Heart left ventricle (tissue), 16 donors: ENCODE measurements at regions of chr12 and their contacts with region 1.

Region 1: DNA sequence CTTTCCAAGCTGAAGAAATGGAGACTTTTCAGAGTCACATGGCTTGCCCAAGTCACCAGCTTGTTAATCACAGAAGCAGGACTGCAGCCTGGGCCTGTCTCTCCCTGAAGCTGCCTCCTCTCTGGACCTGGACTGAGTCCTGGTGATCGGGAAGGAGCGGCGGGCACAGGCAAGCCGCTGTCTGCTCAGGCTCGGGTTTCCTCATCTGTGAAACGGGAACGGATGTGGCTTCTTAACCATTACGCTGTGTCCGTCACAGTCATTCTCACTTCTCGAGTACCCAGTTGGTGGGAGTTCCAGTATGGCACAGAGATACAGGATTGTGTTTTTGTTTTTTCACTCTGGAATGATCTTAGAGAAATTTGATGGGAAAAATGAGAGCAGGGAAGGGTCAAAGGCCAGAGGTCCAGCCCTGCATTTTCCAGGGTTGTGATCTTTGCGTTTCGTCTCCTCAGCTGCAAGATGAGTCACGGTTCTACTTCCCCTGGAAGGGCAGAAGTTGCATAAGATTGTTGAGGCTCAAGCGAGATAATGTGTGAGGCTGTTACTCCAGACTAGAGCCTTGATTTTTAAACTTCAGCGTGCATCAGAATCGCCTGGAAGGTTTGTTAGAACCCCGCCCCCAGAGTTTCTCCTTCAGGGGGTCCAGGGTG is 7.6 kb upstream of the LRTM2 start:
- DNase-seq: peak in 2 of 5 donors; percentile 50 to 51
- ATAC-seq: peak; percentile 44 to 74 (median 59)
- H3K4me3 ChIP-seq: peak overlapping the region in 1 of 12 donors; percentile 10
- H3K27ac ChIP-seq: peak overlapping the region in 8 of 12 donors; percentile 24 to 89 (median 46)
- H3K4me1 ChIP-seq: peaks cover 0 to 51% (median 0%) of the 10 kb centered on the region in 12 donors
- H3K27me3 ChIP-seq: peaks cover 0 to 14% (median 0%) of the 10 kb centered on the region in 9 donors
- CTCF ChIP-seq: no peak
- POLR2A ChIP-seq: no peak

Region 2: DNA sequence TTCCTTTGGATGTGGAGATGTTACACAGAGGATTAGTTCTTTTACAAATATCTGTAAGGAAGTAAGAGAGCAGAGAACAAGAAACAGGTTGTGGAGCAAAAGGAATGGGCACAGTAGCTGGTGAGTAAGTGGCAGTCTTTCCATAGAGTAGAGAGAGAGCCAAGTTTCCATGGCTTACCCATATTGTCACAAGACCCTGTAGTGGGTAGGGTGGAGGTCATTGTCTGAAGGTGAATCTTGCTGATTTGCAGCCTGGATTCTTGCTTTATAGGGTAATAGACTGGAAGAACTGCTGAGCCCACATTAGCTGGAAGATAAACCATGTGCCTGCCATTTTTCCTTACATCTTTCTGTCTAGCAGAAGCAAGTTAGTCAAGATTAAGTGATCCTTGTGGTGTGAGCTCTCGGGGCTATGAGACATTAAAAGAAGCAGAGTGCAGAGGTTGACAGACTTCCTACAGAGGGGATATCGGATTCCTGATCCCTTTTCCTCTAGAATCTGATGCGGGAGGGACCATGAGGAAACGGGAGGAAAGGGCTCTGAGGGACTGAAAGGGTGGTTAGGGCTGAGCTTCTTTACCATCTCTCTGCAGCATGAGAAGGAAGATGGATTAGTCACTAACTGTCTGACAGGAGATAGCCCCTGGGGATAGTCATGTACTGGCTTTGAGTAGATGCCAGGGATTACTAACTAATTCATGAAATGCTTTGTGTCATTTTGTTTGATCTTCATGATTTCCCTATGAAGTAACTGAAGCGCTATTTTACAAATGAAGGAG is 36.4 kb before region 1 on chr12:
- intact Hi-C with region 1: no loop called
- DNase-seq: no peak
- ATAC-seq: peak; percentile 33 to 76 (median 57)
- H3K4me3 ChIP-seq: no peak overlapping the region
- H3K27ac ChIP-seq: peak overlapping the region in 3 of 12 donors; percentile 1 to 34 (median 5)
- H3K4me1 ChIP-seq: peaks cover 0 to 52% (median 31%) of the 10 kb centered on the region in 12 donors
- H3K27me3 ChIP-seq: no peaks in the 10 kb centered on the region
- CTCF ChIP-seq: no peak
- POLR2A ChIP-seq: no peak

Region 3: GRCh38 chr12:1916371-1917171 is 103.8 kb after region 1 on chr12:
- intact Hi-C with region 1: loop called in 2 of 10 experiments (anchors 5 kb)
- DNase-seq: peak; percentile 73 to 82 (median 75)
- ATAC-seq: peak; percentile 73 to 89 (median 77)
- H3K4me3 ChIP-seq: no peak overlapping the region
- H3K27ac ChIP-seq: peak overlapping the region in 1 of 12 donors; percentile 22
- H3K4me1 ChIP-seq: peaks cover 0 to 16% (median 8%) of the 10 kb centered on the region in 12 donors
- H3K27me3 ChIP-seq: no peaks in the 10 kb centered on the region
- CTCF ChIP-seq: no peak
- POLR2A ChIP-seq: no peak

Region 4: DNA sequence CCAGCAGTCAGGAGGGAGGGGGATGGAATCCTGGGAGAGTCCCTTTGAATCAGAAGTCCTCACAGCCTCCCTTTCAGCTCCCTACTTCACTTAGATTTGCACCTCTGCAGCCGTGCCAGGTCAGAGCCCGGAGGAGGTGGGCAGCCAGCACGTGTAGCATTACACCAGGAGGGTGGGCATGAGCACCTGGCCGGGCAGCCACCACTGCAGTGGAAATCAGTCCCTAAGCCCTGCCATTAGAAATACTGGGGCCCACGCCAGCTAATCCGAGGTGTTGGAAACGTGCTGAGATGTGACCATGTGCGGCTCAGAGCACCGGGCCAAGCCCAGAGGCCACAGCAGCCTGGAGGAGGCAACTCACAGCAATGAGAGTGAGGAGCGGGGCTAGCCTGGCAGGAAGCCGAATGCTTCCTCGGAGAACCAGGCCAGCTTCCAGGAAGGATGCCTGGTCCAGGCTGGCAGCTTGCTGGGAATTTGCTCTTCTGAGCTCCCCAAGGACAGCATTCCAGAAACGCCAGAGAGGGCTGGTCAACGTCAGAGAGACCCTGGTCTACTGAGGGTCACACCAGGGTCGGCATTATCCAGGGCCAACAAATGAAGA is 115.1 kb after region 1 on chr12:
- intact Hi-C with region 1: loop called in 1 of 10 experiments (anchors 5 kb)
- DNase-seq: peak; percentile 72 to 92 (median 84)
- ATAC-seq: peak; percentile 76 to 81 (median 78)
- H3K4me3 ChIP-seq: no peak overlapping the region
- H3K27ac ChIP-seq: peak overlapping the region in 6 of 12 donors; percentile 13 to 60 (median 46)
- H3K4me1 ChIP-seq: peaks cover 0 to 54% (median 20%) of the 10 kb centered on the region in 12 donors
- H3K27me3 ChIP-seq: peaks cover 0 to 17% (median 0%) of the 10 kb centered on the region in 9 donors
- CTCF ChIP-seq: no peak
- POLR2A ChIP-seq: no peak